Cardiac septum (tissue), 1 donor: ENCODE measurements at regions of chr5 and their contacts with region 1.

Region 1: DNA sequence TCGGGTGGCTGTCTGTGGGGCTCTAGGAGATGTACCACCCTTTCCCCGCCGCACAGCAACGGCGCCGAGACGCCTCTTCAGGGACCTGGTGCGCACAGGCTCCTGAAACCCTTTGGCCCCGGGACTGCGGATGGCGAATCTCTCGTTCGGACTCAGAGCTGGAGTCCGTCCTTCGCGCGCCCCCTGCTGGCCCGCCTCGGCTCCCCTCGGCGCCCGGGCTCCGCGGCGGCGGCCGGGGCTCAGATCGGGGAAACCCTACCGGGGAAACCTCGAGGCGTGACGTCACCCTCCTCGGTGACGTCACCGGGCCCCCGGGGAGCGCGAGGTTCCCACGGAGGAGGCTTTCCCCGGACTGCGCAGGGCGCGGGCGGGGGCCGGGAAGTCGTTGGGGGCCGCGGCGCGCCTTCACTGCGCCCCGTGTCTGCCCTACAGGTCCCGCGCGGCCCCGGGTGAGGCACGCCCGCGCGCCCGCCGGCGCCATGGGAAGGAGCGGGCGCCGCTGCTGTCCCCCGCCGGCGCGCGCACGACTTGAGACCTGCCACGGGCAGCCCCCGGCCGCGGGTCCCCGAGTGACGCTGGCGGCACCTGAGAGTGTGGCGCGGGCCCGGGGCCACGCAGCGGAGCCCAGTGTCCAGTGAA is 7.9 kb downstream of the PRR7 start:
- DNase-seq: peak; percentile 95

Region 2: DNA sequence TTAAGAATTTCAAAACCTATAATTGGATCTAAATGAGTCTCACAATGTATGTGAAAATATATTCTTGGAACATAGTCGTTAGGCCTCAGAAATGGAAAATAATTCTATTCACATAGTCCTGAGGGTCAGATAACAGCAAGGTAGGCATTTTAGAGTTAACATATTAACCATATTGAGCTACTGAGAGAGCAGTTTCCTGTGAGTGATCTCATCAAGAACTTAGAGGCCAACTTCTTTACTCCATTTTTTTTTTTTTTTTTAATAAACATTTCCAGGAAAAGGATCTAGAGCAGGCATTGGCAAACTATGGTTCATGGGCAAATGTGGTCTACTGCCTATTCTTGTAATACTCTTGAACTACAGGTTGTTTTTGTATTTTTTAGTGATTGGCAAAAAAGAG is 177.6 kb before region 1 on chr5:
- intact Hi-C with region 1: no loop called
- DNase-seq: no peak

Region 3: DNA sequence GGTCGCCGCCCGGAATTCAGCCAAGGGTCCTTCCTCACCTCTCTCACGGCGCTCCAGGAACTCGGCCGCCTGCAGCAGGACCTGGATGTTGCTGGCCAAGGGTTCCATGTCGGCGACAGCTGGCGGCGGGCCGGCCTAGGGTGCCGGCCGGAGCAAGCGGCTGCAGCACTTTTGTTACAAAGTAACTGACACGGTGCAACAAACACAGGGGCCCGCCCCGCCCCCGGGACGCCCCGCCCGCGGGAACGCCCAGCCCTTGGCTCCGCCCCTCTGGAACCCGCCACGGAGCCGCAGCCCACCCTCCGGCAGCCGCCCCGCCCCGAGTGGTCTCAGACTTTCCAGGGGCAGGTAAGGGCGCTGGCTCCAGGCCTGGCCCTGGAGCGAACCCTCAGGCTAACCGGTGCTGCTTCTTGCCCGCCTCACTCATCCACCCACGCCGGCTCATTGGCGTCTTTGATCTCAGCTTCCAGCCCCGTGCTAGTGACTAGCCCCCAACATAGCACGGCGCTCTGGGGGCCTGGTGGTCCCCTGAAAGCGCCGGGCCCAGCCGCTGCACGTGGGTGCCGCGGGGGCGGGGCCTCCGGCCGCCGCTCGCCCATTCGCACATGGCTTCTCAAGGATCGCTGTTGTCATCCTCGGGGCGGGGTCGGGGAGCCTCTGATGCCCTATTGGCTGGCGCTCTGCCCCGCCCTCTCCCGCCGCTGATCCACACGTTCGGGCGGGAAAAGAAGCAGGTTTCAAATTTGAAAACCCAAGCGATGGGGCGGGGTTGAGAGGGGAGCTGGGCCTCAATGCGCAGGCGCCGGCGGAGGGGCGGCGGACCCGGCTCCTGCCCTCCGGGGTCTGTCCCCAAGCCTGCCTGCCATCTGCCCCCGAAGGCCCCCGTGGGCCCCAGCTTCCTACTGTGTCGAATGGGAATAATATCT is 142.5 kb before region 1 on chr5 and contains the start of gene MXD3:
- intact Hi-C with region 1: loop called (anchors 10 kb)
- DNase-seq: peak; percentile 96
- total RNA-seq, gene MXD3: 1.9 TPM

Region 4: GRCh38 chr5:177390363-177391300 is 63.9 kb before region 1 on chr5:
- intact Hi-C with region 1: loop called (anchors 1 kb)
- DNase-seq: peak; percentile 90

Region 5: DNA sequence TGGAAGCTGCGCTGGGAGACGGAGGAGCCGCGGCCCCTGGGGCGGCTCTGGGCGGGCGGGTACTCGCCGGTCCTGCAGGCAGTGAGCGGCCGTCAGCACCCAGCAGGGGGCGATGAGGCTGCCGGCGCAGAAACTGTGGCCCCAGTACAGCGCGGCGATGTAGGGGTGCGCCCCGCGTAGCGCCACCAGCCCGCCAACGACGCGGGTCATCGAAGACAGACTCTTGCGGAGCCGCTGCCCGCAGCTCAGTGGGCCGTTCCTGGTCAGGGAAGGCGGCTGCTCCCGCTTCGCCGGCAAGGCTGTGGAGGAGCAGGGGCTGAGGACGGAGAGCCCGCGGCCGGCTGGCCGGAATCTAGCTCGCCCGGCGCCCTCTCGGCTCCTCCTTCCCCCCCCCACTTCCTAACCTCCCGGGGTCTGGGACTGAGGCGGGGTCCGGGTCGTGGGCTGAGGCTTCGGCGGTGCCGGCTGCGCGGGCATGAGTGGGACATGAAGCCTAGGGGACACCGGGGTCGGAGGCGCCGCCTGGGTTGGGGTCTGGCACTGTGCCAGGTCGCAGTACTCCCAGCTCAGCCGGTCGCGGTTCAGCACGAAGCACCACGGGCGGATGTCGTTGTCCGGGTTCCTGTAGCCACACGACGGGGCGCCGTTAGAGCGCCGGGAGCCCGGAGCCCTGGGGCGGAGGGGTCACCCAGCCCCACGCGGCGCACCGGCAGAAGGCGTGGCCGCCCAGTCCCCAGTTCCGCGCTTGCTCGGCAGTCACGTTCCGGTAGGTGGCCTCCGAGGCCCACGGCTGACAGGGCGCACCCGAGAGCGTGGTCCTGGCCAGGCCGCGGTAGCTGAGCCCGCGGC is 50.5 kb before region 1 on chr5:
- intact Hi-C with region 1: loop called (anchors 1 kb)
- DNase-seq: peak; percentile 95

Region 6: DNA sequence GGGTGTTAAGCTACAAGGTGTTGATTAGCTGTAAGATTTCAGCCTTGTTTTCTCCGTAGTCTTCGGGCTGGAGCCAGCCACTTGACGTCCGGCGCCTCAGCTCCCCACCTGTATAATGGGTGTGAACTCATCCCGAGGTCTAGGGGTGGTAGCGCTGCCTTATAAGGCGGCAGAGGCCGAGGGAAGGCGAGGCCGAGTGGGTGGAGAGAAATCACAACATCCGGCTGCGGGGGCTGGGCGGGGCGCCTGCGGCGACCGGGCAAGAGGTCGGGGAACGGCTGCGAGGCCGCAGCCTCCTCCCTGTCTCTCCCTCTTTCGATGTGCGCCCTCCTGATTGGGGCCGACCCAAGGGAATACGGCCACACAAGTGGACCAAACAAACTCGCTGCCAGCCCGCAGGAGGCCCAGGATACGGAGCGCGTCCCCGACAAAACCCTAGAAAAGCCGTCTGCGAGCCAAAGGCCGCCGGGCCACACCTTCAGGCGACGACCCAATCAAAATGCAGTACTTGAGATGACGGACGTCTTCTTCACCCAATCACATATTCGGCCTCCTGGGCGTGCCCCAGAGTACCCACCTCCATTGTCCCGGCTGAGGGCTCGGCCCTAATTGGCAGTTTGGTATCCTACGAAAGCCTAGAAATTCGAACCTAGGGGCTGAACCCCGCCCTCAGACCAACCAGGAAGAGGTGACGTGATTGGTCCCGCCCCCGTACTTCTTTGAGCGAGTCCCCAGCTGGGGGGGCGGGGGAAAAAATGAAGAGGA is 28.5 kb before region 1 on chr5:
- intact Hi-C with region 1: loop called (anchors 2 kb)
- DNase-seq: peak; percentile 100

Region 7: DNA sequence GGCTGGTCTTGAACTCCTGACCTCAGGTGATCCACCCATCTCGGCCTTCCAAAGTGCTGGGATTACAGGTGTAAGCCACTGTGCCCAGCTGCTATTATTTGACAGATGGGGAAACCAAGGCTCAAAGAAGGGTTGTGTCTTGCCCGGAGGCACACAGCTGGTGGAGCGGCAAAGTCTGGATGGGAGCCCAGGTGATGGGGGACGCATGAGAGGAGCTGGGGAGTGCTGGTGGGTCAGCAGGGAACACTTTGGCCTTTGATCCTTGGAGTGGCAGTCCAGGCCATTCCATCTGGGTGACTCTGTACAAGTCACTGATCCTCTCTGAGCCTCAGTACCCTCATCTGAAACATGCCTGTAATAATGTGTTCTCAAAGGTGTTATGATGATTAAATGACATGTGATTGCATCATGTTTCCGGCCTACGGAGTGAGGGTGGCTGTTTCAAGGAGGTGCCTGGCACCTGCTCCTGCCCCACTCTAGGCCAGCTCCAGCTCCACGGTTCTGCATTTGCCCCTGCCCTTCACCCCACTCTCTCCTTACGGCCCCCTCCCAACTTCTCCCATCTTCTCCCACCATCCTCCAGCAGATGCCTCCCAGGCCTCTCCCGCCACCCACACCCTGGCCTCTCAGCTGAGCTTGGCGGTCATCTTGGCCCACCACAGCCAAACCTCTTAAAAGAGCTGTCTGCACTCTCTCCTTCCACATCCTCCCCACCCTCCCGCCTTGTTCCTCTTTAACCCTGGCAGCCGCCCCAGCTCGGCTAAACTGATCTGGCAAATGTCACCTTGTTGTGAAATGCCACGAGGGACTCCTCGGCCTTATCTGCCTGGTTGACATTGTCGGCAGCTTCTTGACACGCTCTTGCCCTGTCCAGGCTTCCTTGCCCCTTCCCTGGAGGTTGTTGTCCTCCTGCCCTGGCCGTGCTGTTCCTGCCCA is 24.5 kb after region 1 on chr5:
- intact Hi-C with region 1: loop called (anchors 2 kb)
- DNase-seq: peak; percentile 95

Region 8: GRCh38 chr5:177497292-177498033 is 42.9 kb after region 1 on chr5 and contains the start of gene PDLIM7:
- intact Hi-C with region 1: loop called (anchors 1 kb)
- DNase-seq: peak; percentile 98
- total RNA-seq, gene PDLIM7: 133 TPM